ENCODE measurements at regions of chr5 and their contacts with region 1.

Region 1: DNA sequence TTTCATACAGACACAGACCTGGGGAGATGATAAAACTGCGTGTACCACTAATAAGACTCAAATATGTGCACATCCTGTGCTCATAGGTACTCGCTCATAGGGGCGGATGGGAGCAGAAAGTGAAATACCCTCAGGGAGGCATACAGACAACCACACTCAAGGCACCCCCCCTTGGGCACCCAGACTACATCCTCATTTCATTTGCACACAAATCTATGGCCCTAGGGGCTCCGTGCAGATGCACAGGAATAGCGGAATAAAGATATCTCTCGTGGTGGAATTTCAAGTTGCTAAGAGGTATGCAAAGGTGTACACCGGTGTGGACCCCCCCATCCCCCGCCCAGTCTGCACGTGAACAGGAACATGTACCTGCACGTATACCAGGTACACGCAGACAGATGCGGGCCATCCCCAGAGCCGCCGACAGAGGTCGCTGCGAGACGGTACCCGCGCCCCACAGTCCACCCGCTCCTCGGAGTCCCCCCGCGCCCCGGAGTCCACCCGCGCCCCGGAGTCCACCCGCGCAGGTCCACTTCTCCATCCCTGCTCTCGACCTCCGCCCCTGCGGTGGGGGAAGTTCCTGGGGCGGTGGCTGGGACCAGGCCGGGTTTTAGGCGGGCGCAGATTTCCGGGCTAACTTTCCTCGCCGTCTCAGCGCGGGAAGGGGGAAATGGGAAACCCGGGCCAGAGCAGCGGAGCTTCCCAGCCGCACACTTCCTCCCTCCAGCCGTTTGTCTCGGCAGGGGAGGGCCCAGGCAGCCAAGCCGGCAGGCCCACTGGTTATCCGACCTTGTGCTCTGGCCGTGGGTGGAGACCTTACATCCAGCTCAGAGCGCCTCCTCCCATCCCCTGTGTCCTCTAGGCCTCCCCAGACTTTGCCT is 1.0 kb upstream of the IL12B start:
- DNase-seq: peak; percentile 59 to 80 (median 78)
- ATAC-seq: peak; percentile 97
- H3K4me3 ChIP-seq: peak overlapping the region; percentile 39
- H3K27ac ChIP-seq: no peak overlapping the region
- H3K4me1 ChIP-seq: peaks cover 0 to 6% of the 10 kb centered on the region in 2 experiments; a peak in 2 of 5 replicates
- H3K27me3 ChIP-seq: peaks cover 14 to 16% of the 10 kb centered on the region in 2 experiments
- CTCF ChIP-seq: peak; percentile 63 to 68 (median 67); a peak in 5 of 6 replicates
- EP300 ChIP-seq: no peak
- POLR2A ChIP-seq: no peak
- RAD21 ChIP-seq: peak; percentile 65 to 67

Region 2: DNA sequence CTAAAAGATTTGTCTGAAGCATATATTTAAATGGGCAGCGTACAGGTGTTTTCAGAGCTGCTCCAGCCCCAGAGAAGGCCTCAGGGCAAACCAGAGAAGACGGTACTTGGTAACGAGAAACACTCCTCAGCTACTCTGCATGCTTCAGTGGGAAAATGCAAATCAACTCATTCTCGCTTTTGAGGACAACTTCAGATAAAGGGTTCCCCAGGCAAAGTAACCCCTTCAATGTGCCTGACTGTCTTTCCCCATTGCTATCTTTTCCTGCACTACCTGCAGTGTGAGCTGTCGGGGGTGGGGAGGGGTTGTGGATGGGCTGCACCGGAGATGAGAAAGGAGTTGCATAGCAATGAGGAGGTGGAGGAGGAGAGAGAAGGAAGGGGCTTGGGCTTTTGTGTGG is 1132.7 kb before region 1 on chr5:
- CTCF ChIA-PET with region 1: no interaction called
- POLR2A ChIA-PET with region 1: no interaction called
- in situ Hi-C with region 1: loop called (anchors 10 kb)
- intact Hi-C with region 1: no loop called
- DNase-seq: no peak
- ATAC-seq: no peak
- H3K4me3 ChIP-seq: no peak overlapping the region
- H3K27ac ChIP-seq: no peak overlapping the region
- H3K4me1 ChIP-seq: no peaks in the 10 kb centered on the region
- H3K27me3 ChIP-seq: no peaks in the 10 kb centered on the region; a peak in 1 of 5 replicates
- CTCF ChIP-seq: no peak
- EP300 ChIP-seq: no peak
- POLR2A ChIP-seq: no peak
- RAD21 ChIP-seq: no peak

Region 3: DNA sequence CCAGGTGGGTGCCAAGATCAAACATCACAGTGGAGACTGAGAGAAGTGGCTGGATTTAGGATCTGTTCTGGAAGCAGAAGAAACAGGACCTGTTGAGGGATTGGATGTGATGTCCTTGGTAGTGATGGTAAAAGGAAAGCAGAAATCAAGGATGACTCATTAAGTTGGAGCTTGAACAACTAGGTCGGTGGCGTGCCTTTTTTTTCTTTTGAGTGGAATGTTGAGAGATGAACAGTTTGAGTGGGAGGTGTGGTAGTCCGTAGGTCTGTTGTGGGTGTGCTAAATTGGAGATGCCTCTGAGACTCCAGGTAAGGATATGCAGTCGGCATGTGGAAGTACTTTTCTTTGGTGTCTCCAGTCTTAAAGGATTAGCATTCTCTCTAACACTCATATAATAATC is 91.0 kb after region 1 on chr5:
- CTCF ChIA-PET with region 1: no interaction called
- POLR2A ChIA-PET with region 1: no interaction called
- in situ Hi-C with region 1: no loop called
- intact Hi-C with region 1: loop called (anchors 5 kb)
- DNase-seq: no peak
- ATAC-seq: no peak
- H3K4me3 ChIP-seq: no peak overlapping the region
- H3K27ac ChIP-seq: no peak overlapping the region
- H3K4me1 ChIP-seq: no peaks in the 10 kb centered on the region
- H3K27me3 ChIP-seq: no peaks in the 10 kb centered on the region; a peak in 1 of 5 replicates
- CTCF ChIP-seq: no peak
- EP300 ChIP-seq: no peak
- POLR2A ChIP-seq: no peak
- RAD21 ChIP-seq: no peak

Region 4: DNA sequence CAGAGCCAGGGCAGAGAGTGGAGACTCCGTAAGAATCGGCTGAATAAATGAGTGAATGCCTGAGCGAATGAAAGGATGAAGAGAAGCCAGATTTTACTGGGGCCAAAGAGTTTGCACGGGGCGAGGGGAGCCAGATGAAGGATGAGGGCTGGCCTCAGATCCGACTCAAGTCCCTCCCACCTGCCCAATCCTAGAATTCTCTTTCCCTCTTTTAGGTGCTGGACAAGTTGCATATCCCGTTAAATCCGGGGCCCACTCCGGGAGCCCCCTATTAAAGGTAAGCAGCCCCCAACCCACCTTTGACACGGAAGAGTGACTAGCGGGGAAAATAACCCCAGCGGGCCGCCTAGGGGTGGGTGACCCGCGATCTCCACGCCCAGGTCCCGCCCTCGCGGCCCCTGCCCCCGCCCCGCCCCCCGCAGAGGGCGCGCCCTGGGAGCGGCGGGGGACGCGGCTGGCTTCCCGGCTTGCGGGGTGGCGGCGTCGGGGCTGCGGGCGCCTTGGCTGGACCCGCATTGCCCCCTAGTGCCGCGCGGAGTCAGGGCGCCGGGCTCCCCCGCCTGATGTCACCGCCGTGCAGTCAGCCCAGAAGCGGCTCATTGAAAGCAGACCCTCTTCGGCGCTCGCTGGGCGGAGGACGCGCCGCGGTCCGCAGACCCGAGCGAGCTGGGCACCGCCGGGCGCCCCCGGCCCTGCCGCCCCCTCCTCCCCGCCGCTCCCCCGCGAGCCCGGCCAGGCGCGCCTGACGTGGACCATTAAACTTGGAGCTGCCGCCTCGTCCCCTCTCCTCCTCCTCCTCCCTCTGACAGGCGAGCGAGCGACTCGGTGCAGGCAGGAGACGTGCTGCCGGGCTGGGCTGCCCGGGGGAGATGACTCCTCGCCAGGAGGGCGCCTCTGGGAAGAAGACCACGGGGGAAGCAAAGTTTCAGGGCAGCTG is 584.8 kb after region 1 on chr5 and contains the start of gene ADRA1B:
- CTCF ChIA-PET with region 1: no interaction called
- POLR2A ChIA-PET with region 1: no interaction called
- in situ Hi-C with region 1: no loop called
- intact Hi-C with region 1: loop called (anchors 10 kb)
- DNase-seq: peak; percentile 21 to 77 (median 67)
- ATAC-seq: peak; percentile 94
- H3K4me3 ChIP-seq: no peak within 1 kb of the TSS
- H3K27ac ChIP-seq: no peak within 1 kb of the TSS
- H3K4me1 ChIP-seq: peaks cover 0 to 4% of the 10 kb centered on the region in 2 experiments; a peak in 1 of 5 replicates
- H3K27me3 ChIP-seq: peaks cover 13 to 34% of the 10 kb centered on the region in 2 experiments; a peak in 3 of 5 replicates
- CTCF ChIP-seq: peak in 2 of 3 experiments; percentile 55 to 58; a peak in 4 of 6 replicates
- EP300 ChIP-seq: no peak
- POLR2A ChIP-seq: no peak
- RAD21 ChIP-seq: peak; percentile 66 to 84
- polyA plus RNA-seq, gene ADRA1B: not detected

Region 5: GRCh38 chr5:159987031-159987674 is 655.8 kb after region 1 on chr5:
- CTCF ChIA-PET with region 1: no interaction called
- POLR2A ChIA-PET with region 1: no interaction called
- in situ Hi-C with region 1: no loop called
- intact Hi-C with region 1: loop called (anchors 5 kb)
- DNase-seq: peak; percentile 63 to 70 (median 67)
- ATAC-seq: peak; percentile 99
- H3K4me3 ChIP-seq: no peak overlapping the region
- H3K27ac ChIP-seq: no peak overlapping the region
- H3K4me1 ChIP-seq: peaks cover 0 to 8% of the 10 kb centered on the region in 2 experiments; a peak in 2 of 5 replicates
- H3K27me3 ChIP-seq: peaks cover 10 to 43% of the 10 kb centered on the region in 2 experiments; a peak in 4 of 5 replicates
- CTCF ChIP-seq: peak; percentile 62 to 74 (median 66); a peak in 5 of 6 replicates
- EP300 ChIP-seq: no peak
- POLR2A ChIP-seq: no peak
- RAD21 ChIP-seq: peak; percentile 63 to 81